CD4-positive, alpha-beta memory T cell (primary cell): ENCODE measurements at regions of chr10 and their contacts with region 1.

Region 1: GRCh38 chr10:22648547-22648961 is 65.8 kb downstream of the PIP4K2A start:
- DNase-seq: peak in 1 of 5 donors; percentile 27
- H3K4me3 ChIP-seq: peak overlapping the region in 1 of 2 donors; percentile 44
- H3K4me3 Mint-ChIP-seq: peak overlapping the region; percentile 67 to 91 (median 78)
- H3K27ac ChIP-seq: peak overlapping the region; percentile 61
- H3K27ac Mint-ChIP-seq: peak overlapping the region; percentile 85 to 96 (median 95)
- H3K4me1 ChIP-seq: peaks cover 100% of the 10 kb centered on the region
- H3K4me1 Mint-ChIP-seq: peaks cover 82 to 96% (median 90%) of the 10 kb centered on the region in 4 donors
- H3K27me3 ChIP-seq: no peaks in the 10 kb centered on the region
- H3K27me3 Mint-ChIP-seq: no peaks in the 10 kb centered on the region

Region 2: GRCh38 chr10:22630234-22631174 is 18.1 kb before region 1 on chr10:
- CTCF ChIA-PET with region 1: interaction called, 15 read pairs
- POLR2A ChIA-PET with region 1: interaction called, 895 read pairs
- intact Hi-C with region 1: loop called (anchors 1 kb)
- DNase-seq: peak; percentile 66 to 86 (median 68)
- H3K4me3 ChIP-seq: peak overlapping the region; percentile 8 to 38
- H3K4me3 Mint-ChIP-seq: peak overlapping the region; percentile 78 to 86 (median 80)
- H3K27ac ChIP-seq: peak overlapping the region; percentile 64
- H3K27ac Mint-ChIP-seq: peak overlapping the region; percentile 87 to 99 (median 96)
- H3K4me1 ChIP-seq: peaks cover 99% of the 10 kb centered on the region
- H3K4me1 Mint-ChIP-seq: peaks cover 82 to 98% (median 94%) of the 10 kb centered on the region in 4 donors
- H3K27me3 ChIP-seq: no peaks in the 10 kb centered on the region
- H3K27me3 Mint-ChIP-seq: no peaks in the 10 kb centered on the region

Region 3: GRCh38 chr10:22635650-22636049 is 12.9 kb before region 1 on chr10:
- CTCF ChIA-PET with region 1: interaction called, 15 read pairs
- POLR2A ChIA-PET with region 1: interaction called, 895 read pairs
- intact Hi-C with region 1: loop called (anchors 1 kb)
- DNase-seq: no peak
- H3K4me3 ChIP-seq: no peak overlapping the region
- H3K4me3 Mint-ChIP-seq: peak overlapping the region in 7 of 8 donors; percentile 11 to 85 (median 54)
- H3K27ac ChIP-seq: no peak overlapping the region
- H3K27ac Mint-ChIP-seq: peak overlapping the region; percentile 74 to 98 (median 87)
- H3K4me1 ChIP-seq: peaks cover 100% of the 10 kb centered on the region
- H3K4me1 Mint-ChIP-seq: peaks cover 73 to 95% (median 88%) of the 10 kb centered on the region in 4 donors
- H3K27me3 ChIP-seq: no peaks in the 10 kb centered on the region
- H3K27me3 Mint-ChIP-seq: no peaks in the 10 kb centered on the region